K562 (cell line): ENCODE measurements at regions of chr17 and their contacts with region 1.

Region 1: DNA sequence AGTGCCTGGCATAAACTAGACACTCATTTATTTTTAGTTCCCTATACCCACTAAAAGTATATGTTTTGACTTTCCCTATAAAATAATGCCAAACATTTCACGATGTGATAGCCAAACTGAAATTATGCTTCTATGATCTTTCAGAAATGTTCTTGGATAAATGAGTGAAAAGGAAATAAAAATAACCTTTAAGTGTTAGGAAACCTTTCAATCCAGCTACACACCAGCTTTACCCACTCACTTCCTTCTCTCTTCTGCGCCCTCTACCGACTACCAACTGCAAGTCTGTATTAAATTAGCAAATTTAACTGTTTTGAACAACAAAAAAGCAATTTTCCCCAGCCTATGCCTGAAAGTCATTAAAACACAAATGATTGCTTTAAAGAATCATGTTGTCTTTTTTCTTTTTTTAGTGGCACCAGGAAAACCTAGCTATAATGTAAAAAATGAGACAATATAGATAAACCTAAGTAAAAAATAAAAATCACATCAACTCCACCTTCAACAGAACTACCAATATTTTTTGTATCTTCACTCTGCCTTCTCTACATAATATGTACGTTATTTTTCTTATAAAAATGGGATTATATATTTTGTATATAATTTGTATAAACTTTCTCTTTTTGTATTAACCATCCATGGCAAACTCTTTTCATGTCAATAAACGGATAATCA is 13.2 kb upstream of the TMEM100 start:
- DNase-seq: peak; percentile 27 to 83 (median 40)
- ATAC-seq: no peak
- H3K4me3 ChIP-seq: no peak overlapping the region
- H3K27ac ChIP-seq: no peak overlapping the region; the same call in 2 of the 3 replicates
- H3K4me1 ChIP-seq: peaks cover 25 to 63% of the 10 kb centered on the region in 2 experiments
- H3K27me3 ChIP-seq: no peaks in the 10 kb centered on the region
- CTCF ChIP-seq: peak; percentile 60 to 74 (median 70)
- EP300 ChIP-seq: no peak
- POLR2A ChIP-seq: no peak
- RAD21 ChIP-seq: peak; percentile 41 to 60

Region 2: DNA sequence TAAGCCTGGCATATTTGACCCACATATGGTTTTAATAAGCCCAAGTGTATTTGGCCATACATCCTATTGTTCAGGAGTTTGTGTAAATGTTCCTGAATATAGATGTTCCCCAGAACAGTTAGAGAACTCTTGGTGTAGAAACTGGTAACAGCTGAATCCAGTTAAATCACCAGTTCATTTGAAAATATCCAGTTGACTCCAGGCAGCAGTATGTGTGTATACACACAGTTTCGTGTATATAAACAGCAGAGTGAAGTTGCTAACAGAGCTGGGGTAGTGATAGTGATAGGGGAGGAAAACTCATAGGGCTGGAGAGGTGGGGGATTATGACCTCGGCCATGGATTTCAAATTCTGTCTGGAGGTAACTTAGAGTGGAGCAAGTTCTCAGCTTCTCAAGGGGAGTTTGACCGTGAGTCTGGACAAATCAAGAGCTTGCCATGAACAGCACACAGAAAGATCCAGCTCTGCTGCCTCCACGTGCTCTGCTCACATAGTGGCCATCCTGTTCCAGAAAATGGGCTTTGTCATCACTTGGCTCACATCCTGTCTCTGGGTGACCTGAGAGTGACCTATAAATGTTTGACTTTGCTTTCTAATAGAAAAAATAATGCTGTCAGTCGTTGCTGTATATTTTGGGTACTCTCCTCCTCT is 283.6 kb before region 1 on chr17:
- CTCF ChIA-PET with region 1: no interaction called
- POLR2A ChIA-PET with region 1: no interaction called
- in situ Hi-C with region 1: no loop called
- intact Hi-C with region 1: loop called (anchors 10 kb)
- DNase-seq: peak in 2 of 4 experiments; percentile 34 to 71
- ATAC-seq: peak; percentile 68
- H3K4me3 ChIP-seq: no peak overlapping the region
- H3K27ac ChIP-seq: peak overlapping the region; percentile 70
- H3K4me1 ChIP-seq: peaks cover 18 to 55% of the 10 kb centered on the region in 2 experiments
- H3K27me3 ChIP-seq: no peaks in the 10 kb centered on the region
- CTCF ChIP-seq: no peak
- EP300 ChIP-seq: no peak
- POLR2A ChIP-seq: no peak
- RAD21 ChIP-seq: no peak

Region 3: DNA sequence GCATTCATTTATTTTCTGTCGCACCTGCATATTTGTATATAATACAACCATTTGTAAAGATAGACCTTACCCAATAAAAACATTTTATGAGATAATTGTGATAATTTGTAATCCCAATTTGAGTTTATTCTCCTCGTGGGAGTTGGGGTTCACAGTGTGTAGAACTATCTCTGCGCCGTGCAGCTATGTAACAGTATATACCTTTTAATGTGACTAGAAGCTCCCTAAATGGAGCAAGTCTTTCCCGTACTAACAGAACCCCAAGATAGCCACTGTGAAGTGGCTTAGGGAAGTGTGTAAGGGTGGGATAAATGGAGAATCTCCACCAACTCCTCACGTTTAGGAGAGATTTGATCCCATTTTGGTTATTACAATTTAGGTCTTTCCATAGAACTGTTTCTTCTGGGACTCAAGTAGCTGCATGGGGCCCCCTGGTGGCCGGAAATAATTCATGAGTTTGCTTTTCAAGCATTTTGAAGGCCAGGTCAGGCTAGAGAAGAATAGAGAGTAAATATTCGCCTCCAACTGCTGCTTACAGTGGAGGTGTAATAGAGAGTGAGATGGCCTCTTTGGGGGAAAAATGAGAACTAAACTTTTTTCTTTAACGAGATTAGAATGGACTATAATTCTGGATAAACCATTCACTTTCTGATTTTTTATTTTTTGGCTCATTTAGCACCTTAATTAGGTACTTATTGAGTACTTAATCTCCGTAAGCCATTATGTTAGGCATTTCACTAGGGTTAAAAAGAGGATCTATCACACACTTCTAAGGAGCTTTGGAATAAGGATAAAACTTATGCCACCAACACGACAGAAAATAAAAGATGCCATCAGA is 17.8 kb before region 1 on chr17:
- CTCF ChIA-PET with region 1: no interaction called
- POLR2A ChIA-PET with region 1: interaction called, 12 read pairs
- in situ Hi-C with region 1: no loop called
- intact Hi-C with region 1: no loop called
- DNase-seq: peak; percentile 42 to 83 (median 48)
- ATAC-seq: peak; percentile 83
- H3K4me3 ChIP-seq: no peak overlapping the region
- H3K27ac ChIP-seq: no peak overlapping the region
- H3K4me1 ChIP-seq: peaks cover 0 to 6% of the 10 kb centered on the region in 2 experiments; a peak in 3 of 5 replicates
- H3K27me3 ChIP-seq: no peaks in the 10 kb centered on the region
- CTCF ChIP-seq: peak; percentile 76 to 83 (median 78)
- EP300 ChIP-seq: no peak
- POLR2A ChIP-seq: no peak
- RAD21 ChIP-seq: peak; percentile 81 to 87

Region 4: DNA sequence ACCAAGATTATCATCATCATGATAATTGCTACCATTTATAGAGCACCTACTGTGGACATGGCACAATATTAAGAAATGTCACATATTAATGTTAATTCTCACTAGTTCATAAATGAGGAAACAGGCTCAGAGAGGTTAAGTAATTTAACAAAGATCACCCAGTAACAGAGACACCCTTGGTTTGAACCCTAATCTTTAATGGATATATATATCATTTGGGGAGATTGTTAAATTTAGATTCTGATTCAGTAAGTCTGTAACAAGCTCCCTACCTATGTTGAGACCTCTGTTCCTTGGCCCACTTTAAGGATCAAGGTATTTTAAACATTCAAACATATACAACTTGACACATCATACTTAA is 12.4 kb before region 1 on chr17:
- CTCF ChIA-PET with region 1: no interaction called
- POLR2A ChIA-PET with region 1: interaction called, 13 read pairs
- in situ Hi-C with region 1: no loop called
- intact Hi-C with region 1: no loop called
- DNase-seq: no peak
- ATAC-seq: no peak
- H3K4me3 ChIP-seq: no peak overlapping the region
- H3K27ac ChIP-seq: no peak overlapping the region
- H3K4me1 ChIP-seq: peaks cover 3 to 6% of the 10 kb centered on the region in 2 experiments; a peak in 3 of 5 replicates
- H3K27me3 ChIP-seq: no peaks in the 10 kb centered on the region
- CTCF ChIP-seq: no peak
- EP300 ChIP-seq: no peak
- POLR2A ChIP-seq: no peak
- RAD21 ChIP-seq: no peak

Region 5: DNA sequence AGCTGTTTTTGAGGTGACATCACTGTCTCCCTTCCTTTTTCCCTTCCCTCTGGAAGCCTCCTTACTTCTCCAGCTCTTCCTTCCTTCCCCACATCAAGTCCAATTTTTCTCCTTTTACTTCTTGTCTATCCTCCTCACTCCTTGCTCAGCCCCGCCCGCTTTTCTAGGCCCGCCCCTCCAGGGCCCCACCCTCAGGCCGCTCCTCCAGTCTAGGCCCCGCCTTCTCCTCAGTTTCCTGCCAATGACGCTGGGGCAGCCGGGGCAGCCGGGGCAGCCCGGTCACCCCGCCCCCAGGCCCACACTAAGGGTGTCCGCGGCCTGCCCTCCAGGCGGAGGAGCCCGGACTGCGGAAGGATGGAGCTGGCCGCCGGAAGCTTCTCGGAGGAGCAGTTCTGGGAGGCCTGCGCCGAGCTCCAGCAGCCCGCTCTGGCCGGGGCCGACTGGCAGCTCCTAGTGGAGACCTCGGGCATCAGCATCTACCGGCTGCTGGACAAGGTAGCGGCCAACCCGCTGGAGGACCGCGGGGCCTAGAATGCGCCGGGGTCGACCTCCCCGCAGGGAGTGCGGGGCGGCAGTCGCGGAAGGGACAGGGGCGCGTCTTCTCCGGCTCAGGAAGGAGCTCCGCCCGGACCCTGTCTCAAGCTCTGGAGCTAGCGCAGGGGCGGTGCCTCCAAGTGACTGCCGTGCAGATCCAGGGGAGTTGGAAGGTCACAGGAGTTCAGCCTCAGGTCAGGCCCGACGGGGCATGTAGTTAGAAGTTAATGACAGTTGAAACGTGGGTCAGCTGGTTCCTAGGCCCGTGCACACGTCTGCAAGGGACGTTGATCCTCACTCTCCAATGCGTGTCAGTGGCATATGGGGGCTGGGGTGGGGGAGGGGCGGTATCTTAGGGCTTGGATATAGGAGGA is 15.1 kb after region 1 on chr17 and contains the start of gene PCTP:
- CTCF ChIA-PET with region 1: no interaction called
- POLR2A ChIA-PET with region 1: interaction called, 12 read pairs
- in situ Hi-C with region 1: no loop called
- intact Hi-C with region 1: no loop called
- DNase-seq: peak; percentile 96 to 97 (median 97)
- ATAC-seq: peak; percentile 98
- H3K4me3 ChIP-seq: peak within 1 kb of the TSS; percentile 83
- H3K27ac ChIP-seq: peak within 1 kb of the TSS; percentile 84
- H3K4me1 ChIP-seq: peaks cover 5 to 22% of the 10 kb centered on the region in 2 experiments; a peak in 4 of 5 replicates
- H3K27me3 ChIP-seq: no peaks in the 10 kb centered on the region
- CTCF ChIP-seq: peak; percentile 38 to 56 (median 55)
- EP300 ChIP-seq: 0 out of 2 replicates have a peak, but pooled peaks have one; percentile 11
- POLR2A ChIP-seq: peak; percentile 96
- RAD21 ChIP-seq: 0 out of 4 replicates have a peak, but pooled peaks of 1 of the 2 experiments have one; percentile 15
- polyA plus RNA-seq, gene PCTP: 10.9 to 12.4 TPM

Region 6: DNA sequence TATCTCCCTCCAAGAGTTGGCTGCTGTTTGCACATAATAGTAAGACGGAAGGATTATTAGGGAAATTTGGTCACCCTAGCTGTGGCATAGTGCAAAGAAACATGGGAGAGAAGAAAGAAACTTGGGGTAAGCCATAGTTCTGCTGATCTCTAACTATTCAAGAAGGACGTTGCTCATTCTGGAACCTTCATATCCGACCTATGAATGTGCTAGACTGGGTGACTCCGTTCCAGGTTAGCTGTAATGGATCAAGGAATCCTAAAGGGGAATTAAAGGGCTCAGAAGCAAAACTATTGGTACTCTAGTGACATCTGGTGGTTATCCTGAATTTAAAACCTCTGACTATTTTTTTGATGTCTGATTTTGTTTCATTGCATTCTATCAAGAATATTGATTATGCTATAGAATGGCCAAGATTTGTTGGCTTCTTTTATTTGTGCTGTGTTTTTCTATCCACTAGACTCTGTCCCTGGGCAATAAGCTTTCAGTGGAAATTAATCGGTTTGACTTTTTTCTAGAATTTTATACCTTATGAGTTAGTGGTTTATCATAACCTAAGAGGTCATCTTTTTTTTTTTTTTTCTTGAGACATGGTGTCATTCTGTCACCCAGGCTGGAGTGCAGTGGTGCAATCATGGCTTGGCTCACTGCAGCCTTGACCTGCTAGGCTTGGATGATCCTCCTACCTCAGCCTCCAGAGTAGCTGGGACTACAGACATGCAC is 34.4 kb after region 1 on chr17:
- CTCF ChIA-PET with region 1: no interaction called
- POLR2A ChIA-PET with region 1: no interaction called
- in situ Hi-C with region 1: no loop called
- intact Hi-C with region 1: loop called (anchors 5 kb)
- DNase-seq: peak; percentile 39 to 64 (median 52)
- ATAC-seq: peak; percentile 65
- H3K4me3 ChIP-seq: no peak overlapping the region
- H3K27ac ChIP-seq: no peak overlapping the region
- H3K4me1 ChIP-seq: no peaks in the 10 kb centered on the region
- H3K27me3 ChIP-seq: no peaks in the 10 kb centered on the region
- CTCF ChIP-seq: peak; percentile 36 to 81 (median 56); a peak in 4 of 6 replicates
- EP300 ChIP-seq: no peak
- POLR2A ChIP-seq: no peak
- RAD21 ChIP-seq: peak; percentile 86 to 90

Region 7: GRCh38 chr17:55816532-55817396 is 80.9 kb after region 1 on chr17:
- CTCF ChIA-PET with region 1: no interaction called
- POLR2A ChIA-PET with region 1: interaction called, 4 read pairs
- in situ Hi-C with region 1: no loop called
- intact Hi-C with region 1: loop called (anchors 5 kb)
- DNase-seq: peak; percentile 60 to 78 (median 66)
- ATAC-seq: peak; percentile 82
- H3K4me3 ChIP-seq: 0 out of 2 replicates have a peak overlapping the region, but pooled peaks have one; percentile 0
- H3K27ac ChIP-seq: peak overlapping the region; percentile 92
- H3K4me1 ChIP-seq: peaks cover 21 to 64% of the 10 kb centered on the region in 2 experiments; a peak in 4 of 5 replicates
- H3K27me3 ChIP-seq: no peaks in the 10 kb centered on the region
- CTCF ChIP-seq: 0 out of 6 replicates have a peak, but pooled peaks of 1 of the 3 experiments have one; percentile 8
- EP300 ChIP-seq: peak; percentile 100
- POLR2A ChIP-seq: no peak
- RAD21 ChIP-seq: no peak